Activated CD8-positive, alpha-beta T cell treated with anti-CD3 and anti-CD28 coated beads for 36 hours (primary cell): ENCODE measurements at regions of chr5 and their contacts with region 1.

Region 1: DNA sequence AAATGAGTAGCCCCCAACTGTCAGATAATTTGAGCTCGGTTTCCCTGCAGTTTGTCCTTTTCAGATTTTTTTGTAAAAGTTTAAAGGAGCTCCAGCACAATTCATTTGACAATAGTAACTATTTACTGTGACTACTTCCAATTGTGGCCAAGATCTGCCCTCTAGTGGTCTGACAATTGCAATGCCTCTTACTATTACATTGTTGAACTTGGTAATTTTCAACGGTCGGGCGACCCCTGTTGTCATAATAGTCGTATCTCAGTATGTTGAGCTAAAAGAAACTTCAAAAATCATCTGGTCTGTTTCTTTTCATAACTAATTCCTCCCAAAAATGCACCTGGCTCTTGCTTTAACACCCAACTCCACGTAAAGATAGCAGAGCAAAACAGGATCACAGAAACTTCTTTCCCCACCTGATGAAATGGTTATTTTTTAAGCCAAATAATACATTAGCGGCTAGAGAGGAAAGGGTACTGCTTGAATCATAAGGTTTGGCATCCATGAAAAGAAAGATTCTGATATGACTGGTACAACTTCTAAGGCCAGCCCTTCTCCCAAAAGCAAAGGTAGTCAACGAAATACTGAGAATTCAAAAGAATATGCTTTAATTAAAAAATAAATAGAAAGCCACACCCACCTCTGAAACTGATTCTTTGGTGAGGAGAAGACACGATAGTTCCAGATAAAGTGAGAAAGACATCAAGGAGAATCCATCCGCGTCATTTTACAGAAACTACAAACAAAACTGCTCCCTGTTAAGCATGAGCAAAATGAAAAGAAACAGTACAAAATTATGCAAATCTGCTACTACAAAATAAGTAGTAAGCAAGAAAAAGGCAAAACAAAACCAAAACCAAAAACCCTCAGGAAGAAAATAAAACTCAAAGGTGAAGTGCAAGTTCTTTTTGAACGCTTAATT is 76.9 kb upstream of the HTR4 start:
- DNase-seq: peak; percentile 89
- ATAC-seq: peak; percentile 95
- H3K4me3 Mint-ChIP-seq: peak overlapping the region; percentile 20
- H3K27ac Mint-ChIP-seq: peak overlapping the region; percentile 30
- H3K4me1 Mint-ChIP-seq: peaks cover 2% of the 10 kb centered on the region
- H3K27me3 Mint-ChIP-seq: peaks cover 5% of the 10 kb centered on the region
- CTCF ChIP-seq: peak; percentile 98

Region 2: DNA sequence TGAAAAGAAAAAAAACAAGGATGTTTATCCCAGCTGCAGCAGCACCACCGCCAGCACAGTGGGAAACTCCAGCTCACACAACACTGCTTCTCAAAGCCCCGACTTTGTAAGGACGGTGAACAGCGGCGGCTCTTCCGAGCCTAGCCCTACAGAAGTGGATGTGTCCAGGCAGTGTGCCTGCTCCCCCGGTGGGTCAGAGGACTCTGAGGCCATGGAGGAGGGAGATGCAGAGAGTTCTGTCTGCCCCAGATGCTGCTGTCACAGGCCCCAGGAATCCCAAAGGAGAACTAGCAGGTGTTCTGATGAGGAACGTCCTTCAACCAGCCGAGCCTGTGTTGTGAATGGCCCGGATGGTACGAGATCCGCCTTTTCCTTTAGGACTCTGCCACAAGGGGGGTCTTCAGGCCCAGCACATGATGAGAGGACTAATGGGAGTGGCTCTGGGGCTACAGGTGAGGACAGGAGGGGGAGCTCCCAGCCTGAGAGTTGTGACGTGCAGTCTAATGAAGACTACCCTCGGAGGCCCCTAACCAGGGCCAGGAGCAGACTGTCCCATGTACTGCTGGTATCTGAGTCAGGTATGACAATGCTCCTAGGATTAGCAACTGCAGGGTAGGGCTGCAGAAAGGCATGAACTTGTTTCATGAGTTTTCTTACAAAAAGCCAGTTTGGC is 303.7 kb before region 1 on chr5:
- CTCF ChIA-PET with region 1: interaction called, 13 read pairs
- POLR2A ChIA-PET with region 1: no interaction called
- intact Hi-C with region 1: no loop called
- DNase-seq: no peak
- ATAC-seq: no peak
- H3K4me3 Mint-ChIP-seq: no peak overlapping the region
- H3K27ac Mint-ChIP-seq: peak overlapping the region; percentile 53
- H3K4me1 Mint-ChIP-seq: peaks cover 22% of the 10 kb centered on the region
- H3K27me3 Mint-ChIP-seq: no peaks in the 10 kb centered on the region
- CTCF ChIP-seq: no peak

Region 3: DNA sequence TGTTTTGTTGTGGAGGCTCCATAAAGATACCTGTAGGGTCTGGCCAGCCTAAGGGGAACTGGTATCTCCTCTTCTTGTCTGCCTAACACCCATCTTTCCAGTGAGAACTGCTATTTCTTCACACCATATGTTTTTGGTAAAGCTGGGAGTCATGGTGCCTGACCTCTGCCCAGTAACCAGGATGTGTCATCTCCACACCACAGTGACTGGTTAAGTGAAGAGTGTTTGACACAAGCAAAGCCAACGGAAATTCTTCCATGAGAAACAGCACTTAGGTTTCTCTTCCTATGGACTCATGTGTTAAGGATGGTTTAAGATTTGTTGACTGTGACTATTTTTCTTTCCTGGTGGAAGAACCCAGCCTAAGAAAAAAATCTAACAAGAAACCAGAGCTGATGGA is 188.4 kb before region 1 on chr5:
- CTCF ChIA-PET with region 1: interaction called, 13 read pairs
- POLR2A ChIA-PET with region 1: no interaction called
- intact Hi-C with region 1: no loop called
- DNase-seq: no peak
- ATAC-seq: no peak
- H3K4me3 Mint-ChIP-seq: no peak overlapping the region
- H3K27ac Mint-ChIP-seq: no peak overlapping the region
- H3K4me1 Mint-ChIP-seq: no peaks in the 10 kb centered on the region
- H3K27me3 Mint-ChIP-seq: peaks cover 3% of the 10 kb centered on the region
- CTCF ChIP-seq: no peak

Region 4: DNA sequence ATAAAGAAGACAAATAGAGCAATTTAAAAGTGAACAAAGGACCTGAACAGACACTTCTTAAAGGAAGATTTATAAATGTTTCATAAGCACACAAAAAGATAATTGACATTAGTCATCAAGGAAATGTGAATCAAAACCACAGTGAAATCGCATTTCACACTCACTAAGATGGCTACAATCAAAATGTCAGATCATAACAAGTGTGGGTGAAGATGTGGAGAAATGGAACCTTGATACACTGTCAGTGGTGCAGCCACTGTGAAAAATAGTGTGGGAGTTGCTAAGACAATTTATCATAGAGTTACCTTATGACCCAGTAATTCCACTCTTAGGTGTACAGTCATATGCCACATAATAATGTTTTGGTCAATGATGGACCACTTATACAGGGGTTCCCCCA is 22.3 kb before region 1 on chr5:
- CTCF ChIA-PET with region 1: interaction called, 26 read pairs
- POLR2A ChIA-PET with region 1: no interaction called
- intact Hi-C with region 1: no loop called
- DNase-seq: peak; percentile 69
- ATAC-seq: peak; percentile 97
- H3K4me3 Mint-ChIP-seq: no peak overlapping the region
- H3K27ac Mint-ChIP-seq: peak overlapping the region; percentile 55
- H3K4me1 Mint-ChIP-seq: peaks cover 35% of the 10 kb centered on the region
- H3K27me3 Mint-ChIP-seq: peaks cover 26% of the 10 kb centered on the region
- CTCF ChIP-seq: no peak

Region 5: DNA sequence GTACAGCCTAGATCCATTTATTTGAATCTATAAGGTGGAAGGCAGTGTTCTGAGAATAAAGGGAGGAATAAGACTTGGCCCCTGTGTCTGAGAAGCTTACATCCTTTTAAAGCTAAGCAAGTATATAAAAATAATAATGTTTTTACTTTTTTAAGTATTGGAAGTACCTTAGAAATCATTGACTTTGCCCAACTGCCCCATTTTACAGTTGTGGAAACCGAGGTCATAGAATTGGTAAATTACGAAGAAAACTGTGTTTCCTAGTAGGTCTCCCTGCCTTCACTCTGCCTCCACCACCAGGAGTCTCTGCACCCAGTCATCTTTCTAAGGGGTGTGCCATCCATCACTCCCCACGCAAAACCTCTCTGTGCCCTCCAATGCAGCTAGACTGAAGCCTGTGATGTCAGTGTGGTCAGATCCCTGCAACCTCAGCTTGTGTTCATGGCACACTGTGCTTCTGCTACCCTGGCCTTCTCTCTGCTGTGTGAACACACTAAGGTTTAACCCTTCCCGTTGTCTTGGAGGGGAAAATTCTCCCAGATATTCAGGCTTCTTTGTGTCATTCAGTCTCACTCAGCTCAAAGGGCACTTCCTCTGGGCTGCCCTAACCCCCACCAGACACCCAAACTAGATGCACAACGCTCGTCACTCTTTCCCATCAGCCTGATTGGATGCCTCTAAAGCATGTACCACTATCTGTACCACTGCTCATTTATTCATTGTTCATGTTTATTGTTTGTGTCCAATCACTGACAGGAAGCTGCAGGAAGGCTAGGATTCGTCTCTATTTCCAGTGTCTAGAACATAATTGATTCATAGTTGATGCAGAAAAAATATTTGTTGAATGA is 113.5 kb after region 1 on chr5:
- CTCF ChIA-PET with region 1: no interaction called
- POLR2A ChIA-PET with region 1: no interaction called
- intact Hi-C with region 1: no loop called
- DNase-seq: peak; percentile 64
- ATAC-seq: peak; percentile 55
- H3K4me3 Mint-ChIP-seq: no peak overlapping the region
- H3K27ac Mint-ChIP-seq: peak overlapping the region; percentile 77
- H3K4me1 Mint-ChIP-seq: peaks cover 34% of the 10 kb centered on the region
- H3K27me3 Mint-ChIP-seq: no peaks in the 10 kb centered on the region
- CTCF ChIP-seq: no peak

Region 6: DNA sequence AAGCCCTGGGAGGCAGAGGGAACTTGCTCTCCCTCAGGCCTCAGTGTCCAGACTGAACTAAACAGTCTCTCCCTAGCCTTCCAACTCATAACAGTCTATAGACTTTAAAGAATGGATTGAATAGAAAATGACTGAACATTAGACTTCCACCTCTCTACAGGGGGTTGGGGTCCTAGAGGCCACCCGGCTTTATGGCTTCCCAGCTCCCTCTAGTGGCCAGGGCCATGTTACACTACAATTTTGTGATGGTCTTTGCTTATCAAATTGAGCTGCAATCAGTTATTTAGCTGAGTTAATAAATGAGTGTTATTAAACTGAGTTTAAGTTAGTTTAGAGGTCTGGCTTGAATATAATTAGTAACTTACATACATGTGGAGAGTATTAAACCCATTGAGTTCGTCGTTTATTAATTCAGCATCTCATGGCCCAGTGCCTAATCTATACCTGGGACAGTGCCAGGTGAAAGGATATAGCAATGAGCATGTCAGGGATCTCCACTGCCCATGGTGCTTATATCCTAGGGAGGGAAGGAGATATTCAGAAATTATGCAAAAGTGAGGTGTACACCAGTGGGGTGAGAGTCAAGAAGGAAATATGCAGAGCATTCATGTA is 226.5 kb after region 1 on chr5:
- CTCF ChIA-PET with region 1: interaction called, 363 read pairs
- POLR2A ChIA-PET with region 1: no interaction called
- intact Hi-C with region 1: loop called (anchors 5 kb)
- DNase-seq: peak; percentile 74
- ATAC-seq: peak; percentile 73
- H3K4me3 Mint-ChIP-seq: no peak overlapping the region
- H3K27ac Mint-ChIP-seq: no peak overlapping the region
- H3K4me1 Mint-ChIP-seq: no peaks in the 10 kb centered on the region
- H3K27me3 Mint-ChIP-seq: peaks cover 2% of the 10 kb centered on the region
- CTCF ChIP-seq: peak; percentile 97

Region 7: GRCh38 chr5:149114403-149115312 is 383.5 kb after region 1 on chr5:
- CTCF ChIA-PET with region 1: interaction called, 56 read pairs
- POLR2A ChIA-PET with region 1: no interaction called
- intact Hi-C with region 1: loop called (anchors 2 kb)
- DNase-seq: peak; percentile 58
- ATAC-seq: peak; percentile 64
- H3K4me3 Mint-ChIP-seq: no peak overlapping the region
- H3K27ac Mint-ChIP-seq: no peak overlapping the region
- H3K4me1 Mint-ChIP-seq: no peaks in the 10 kb centered on the region
- H3K27me3 Mint-ChIP-seq: peaks cover 18% of the 10 kb centered on the region
- CTCF ChIP-seq: peak; percentile 60